ENCODE measurements at regions of chr14 and their contacts with region 1.

Region 1: GRCh38 chr14:54773171-54773975 is 129.3 kb downstream of the GCH1 start:
- DNase-seq: peak; percentile 98
- H3K4me3 ChIP-seq: peak overlapping the region in 5 of 7 experiments; percentile 23 to 65 (median 38)
- H3K27ac ChIP-seq: peak overlapping the region; percentile 21 to 52
- H3K4me1 ChIP-seq: peaks cover 11 to 53% (median 46%) of the 10 kb centered on the region in 4 experiments
- H3K27me3 ChIP-seq: no peaks in the 10 kb centered on the region

Region 2: DNA sequence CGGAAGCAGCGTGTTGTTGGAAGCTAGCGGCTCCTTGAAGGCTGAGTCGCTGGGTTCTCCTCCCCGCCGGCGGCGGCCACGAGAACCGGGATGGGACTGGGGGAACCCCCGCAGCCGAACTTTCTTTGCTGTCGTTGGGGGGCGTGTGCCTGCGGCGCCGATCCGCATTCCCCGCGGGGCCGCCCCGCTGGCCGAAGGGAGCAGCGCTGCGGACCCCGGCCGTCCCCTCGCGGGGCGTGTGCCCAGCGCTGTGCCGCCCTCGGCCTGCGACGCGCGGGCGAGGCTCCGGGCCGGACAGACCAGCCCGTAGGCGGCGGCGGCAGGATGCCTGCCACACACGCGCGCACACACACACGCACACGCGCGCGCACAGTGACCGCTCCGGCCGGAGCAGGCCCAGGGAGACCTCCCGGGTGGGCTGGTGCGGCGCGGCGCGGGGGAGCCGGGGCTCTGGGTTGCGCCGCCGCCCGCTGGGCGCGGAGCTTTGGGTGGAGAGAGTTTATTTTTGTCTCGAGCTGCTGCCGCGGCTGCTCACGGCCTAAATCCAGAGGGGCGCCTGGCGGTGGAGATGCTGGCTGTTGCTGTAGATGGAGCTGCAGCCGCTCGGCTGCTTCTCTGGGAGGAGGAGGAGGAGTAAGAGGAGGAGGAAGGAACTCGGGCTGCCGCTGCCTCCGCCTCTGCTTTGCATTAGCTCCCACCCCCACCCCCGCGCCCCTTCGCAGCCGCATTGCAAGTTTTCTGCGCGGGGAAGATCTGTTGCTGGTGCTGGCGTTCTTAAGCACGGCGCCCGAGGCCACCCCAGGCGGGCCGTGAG is 206.8 kb before region 1 on chr14 and contains the start of gene SAMD4A:
- CTCF ChIA-PET with region 1: interaction called, 123 read pairs
- POLR2A ChIA-PET with region 1: interaction called, 14 read pairs
- DNase-seq: peak; percentile 71 to 85 (median 77)
- H3K4me3 ChIP-seq: peak within 1 kb of the TSS; percentile 65 to 92 (median 71)
- H3K27ac ChIP-seq: no peak within 1 kb of the TSS
- H3K4me1 ChIP-seq: peaks cover 7 to 39% (median 32%) of the 10 kb centered on the region in 4 experiments
- H3K27me3 ChIP-seq: peaks cover 0 to 15% (median 0%) of the 10 kb centered on the region in 5 experiments

Region 3: GRCh38 chr14:54642801-54643697 is 130.3 kb before region 1 on chr14:
- CTCF ChIA-PET with region 1: interaction called, 21 read pairs
- POLR2A ChIA-PET with region 1: no interaction called
- DNase-seq: peak; percentile 34 to 66 (median 58)
- H3K4me3 ChIP-seq: no peak overlapping the region
- H3K27ac ChIP-seq: no peak overlapping the region
- H3K4me1 ChIP-seq: no peaks in the 10 kb centered on the region
- H3K27me3 ChIP-seq: no peaks in the 10 kb centered on the region

Region 4: DNA sequence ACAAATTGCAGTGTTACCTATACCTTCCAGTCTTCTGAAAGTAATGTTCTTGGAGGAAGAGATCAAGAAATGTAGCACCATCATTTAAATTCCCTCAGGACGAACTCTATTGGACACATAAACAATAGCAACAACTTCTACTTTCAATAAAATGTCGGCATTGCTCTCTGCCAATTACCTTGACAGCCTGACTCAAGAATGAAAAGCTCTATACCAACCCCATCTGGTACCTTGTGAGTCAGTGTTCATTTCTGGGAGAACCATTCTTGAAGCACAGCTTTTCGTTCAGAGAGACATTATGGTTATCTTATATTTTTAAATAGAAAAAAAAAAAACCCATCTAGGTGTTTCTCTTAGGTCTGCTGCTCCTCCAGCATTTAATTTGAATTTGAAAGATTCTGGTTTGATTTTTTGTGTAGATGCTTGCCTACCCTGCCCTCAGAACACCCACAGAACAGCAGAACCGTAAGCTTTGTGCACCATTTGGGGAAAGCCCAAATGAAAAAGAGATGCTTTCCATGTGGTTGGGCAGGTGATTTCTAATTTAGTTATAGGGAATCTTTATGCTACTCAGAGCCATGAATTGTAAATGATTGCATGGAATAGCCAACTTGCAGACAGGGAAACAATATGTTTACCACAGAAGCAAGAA is 50.5 kb before region 1 on chr14:
- CTCF ChIA-PET with region 1: interaction called, 35 read pairs
- POLR2A ChIA-PET with region 1: no interaction called
- DNase-seq: peak; percentile 65 to 79 (median 79)
- H3K4me3 ChIP-seq: peak overlapping the region in 1 of 7 experiments; percentile 37
- H3K27ac ChIP-seq: no peak overlapping the region
- H3K4me1 ChIP-seq: no peaks in the 10 kb centered on the region
- H3K27me3 ChIP-seq: no peaks in the 10 kb centered on the region

Region 5: GRCh38 chr14:54762296-54762695 is 11.1 kb before region 1 on chr14:
- CTCF ChIA-PET with region 1: interaction called, 27 read pairs
- POLR2A ChIA-PET with region 1: interaction called, 7 read pairs
- DNase-seq: peak in 2 of 3 donors; percentile 36 to 44
- H3K4me3 ChIP-seq: no peak overlapping the region
- H3K27ac ChIP-seq: no peak overlapping the region
- H3K4me1 ChIP-seq: peaks cover 0 to 26% (median 22%) of the 10 kb centered on the region in 4 experiments
- H3K27me3 ChIP-seq: no peaks in the 10 kb centered on the region

Region 6: GRCh38 chr14:54857830-54858269 is 84.5 kb after region 1 on chr14:
- CTCF ChIA-PET with region 1: no interaction called
- POLR2A ChIA-PET with region 1: no interaction called
- DNase-seq: peak; percentile 7 to 53 (median 48)
- H3K4me3 ChIP-seq: no peak overlapping the region
- H3K27ac ChIP-seq: no peak overlapping the region
- H3K4me1 ChIP-seq: peaks cover 0 to 22% (median 7%) of the 10 kb centered on the region in 4 experiments
- H3K27me3 ChIP-seq: no peaks in the 10 kb centered on the region

Region 7: GRCh38 chr14:54908190-54908589 is 134.8 kb after region 1 on chr14:
- CTCF ChIA-PET with region 1: no interaction called
- POLR2A ChIA-PET with region 1: no interaction called
- DNase-seq: peak; percentile 38 to 83 (median 75)
- H3K4me3 ChIP-seq: peak overlapping the region in 2 of 7 experiments; percentile 57 to 65
- H3K27ac ChIP-seq: no peak overlapping the region
- H3K4me1 ChIP-seq: peaks cover 0 to 8% (median 3%) of the 10 kb centered on the region in 4 experiments
- H3K27me3 ChIP-seq: no peaks in the 10 kb centered on the region

Region 8: DNA sequence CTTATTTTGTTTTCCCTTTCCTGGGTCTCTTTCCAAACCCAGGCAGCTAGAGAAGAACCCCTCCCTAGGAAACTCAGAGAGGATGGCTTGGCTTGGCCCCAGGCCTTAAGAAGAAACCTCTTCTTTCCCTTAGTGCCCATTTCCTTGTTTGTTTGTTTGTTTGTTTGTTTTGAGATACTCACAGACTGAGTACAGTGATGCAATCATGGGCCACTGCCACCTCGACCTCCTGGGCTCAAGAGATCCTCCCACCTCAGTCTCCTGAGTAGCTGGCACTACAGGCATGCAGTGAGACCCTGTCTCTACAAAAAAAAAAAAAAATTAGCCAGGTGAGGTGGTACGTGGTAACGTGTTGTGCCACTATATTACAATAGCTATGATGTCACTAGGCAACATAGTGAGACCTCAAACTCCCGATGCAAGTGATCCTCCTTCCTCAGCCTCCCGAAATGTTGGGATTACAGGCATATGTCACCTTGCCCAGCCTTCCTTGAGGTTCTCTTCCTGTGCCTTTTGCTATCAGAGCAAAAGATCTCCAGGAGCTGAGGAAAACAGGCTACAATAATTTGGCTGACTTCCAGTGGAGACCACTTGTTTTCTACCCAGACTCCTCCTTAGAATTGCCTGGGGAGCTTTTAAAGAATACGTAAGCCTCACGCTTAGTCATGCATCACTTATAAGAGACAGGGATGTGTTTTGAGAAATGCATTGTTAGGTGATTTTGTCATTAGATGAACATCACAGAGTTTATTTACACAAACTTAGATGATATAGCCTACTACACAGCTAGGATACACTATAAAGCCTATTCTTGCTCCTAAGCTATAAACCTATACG is 321.2 kb after region 1 on chr14:
- CTCF ChIA-PET with region 1: no interaction called
- POLR2A ChIA-PET with region 1: no interaction called
- DNase-seq: no peak
- H3K4me3 ChIP-seq: no peak overlapping the region
- H3K27ac ChIP-seq: no peak overlapping the region
- H3K4me1 ChIP-seq: peaks cover 0 to 7% (median 4%) of the 10 kb centered on the region in 4 experiments
- H3K27me3 ChIP-seq: no peaks in the 10 kb centered on the region

Measured in common myeloid progenitor, CD34-positive (primary cell).